ENCODE measurements at regions of chr12 and their contacts with region 1.

Region 1: GRCh38 chr12:8949342-8950220 is at the start of gene M6PR:
- DNase-seq: peak; percentile 94 to 96
- H3K4me3 ChIP-seq: peak within 1 kb of the TSS; percentile 67 to 83
- H3K27ac ChIP-seq: peak within 1 kb of the TSS; percentile 92 to 96
- H3K4me1 ChIP-seq: peaks cover 0 to 28% (median 20%) of the 10 kb centered on the region in 4 donors
- H3K27me3 ChIP-seq: no peaks in the 10 kb centered on the region
- CTCF ChIP-seq: peak in 1 of 2 experiments; percentile 51

Region 2: DNA sequence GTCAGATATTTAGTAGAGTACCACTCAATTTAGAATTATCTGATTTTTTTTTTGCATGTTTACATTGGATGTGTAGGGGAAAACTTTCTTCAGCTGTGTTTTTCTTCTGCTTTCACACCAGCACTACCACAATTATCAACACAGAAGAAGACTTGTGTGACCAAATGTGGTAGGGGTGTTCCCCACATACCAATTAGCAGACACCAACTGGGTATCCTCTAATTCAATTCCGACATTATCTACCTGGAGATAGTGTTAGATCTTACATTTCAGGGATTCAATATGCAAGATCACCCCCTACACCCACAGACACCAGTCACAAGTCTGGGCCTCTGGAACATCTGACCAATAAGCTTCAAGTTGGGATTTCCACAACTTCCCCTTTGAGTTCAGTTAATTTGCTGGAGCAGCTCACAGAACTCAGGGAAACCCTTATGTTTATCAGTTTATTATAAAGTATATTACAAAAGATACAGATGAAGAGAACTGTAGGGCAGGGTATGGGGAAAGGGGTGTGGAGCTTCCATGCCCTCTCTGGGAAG is 35.7 kb after region 1 on chr12:
- intact Hi-C with region 1: no loop called
- DNase-seq: no peak
- H3K4me3 ChIP-seq: no peak overlapping the region
- H3K27ac ChIP-seq: no peak overlapping the region
- H3K4me1 ChIP-seq: no peaks in the 10 kb centered on the region
- H3K27me3 ChIP-seq: no peaks in the 10 kb centered on the region
- CTCF ChIP-seq: no peak

Region 3: GRCh38 chr12:9039397-9039977 is 89.9 kb after region 1 on chr12:
- intact Hi-C with region 1: loop called (anchors 10 kb)
- DNase-seq: no peak
- H3K4me3 ChIP-seq: no peak overlapping the region
- H3K27ac ChIP-seq: no peak overlapping the region
- H3K4me1 ChIP-seq: peaks cover 0 to 8% (median 0%) of the 10 kb centered on the region in 4 donors
- H3K27me3 ChIP-seq: no peaks in the 10 kb centered on the region
- CTCF ChIP-seq: peak; percentile 71 to 77

Region 4: GRCh38 chr12:9064201-9064814 is 114.7 kb after region 1 on chr12:
- intact Hi-C with region 1: loop called (anchors 5 kb)
- DNase-seq: peak; percentile 70 to 77
- H3K4me3 ChIP-seq: peak overlapping the region; percentile 72 to 90
- H3K27ac ChIP-seq: peak overlapping the region; percentile 94 to 98
- H3K4me1 ChIP-seq: peaks cover 0 to 22% (median 16%) of the 10 kb centered on the region in 4 donors
- H3K27me3 ChIP-seq: no peaks in the 10 kb centered on the region
- CTCF ChIP-seq: peak; percentile 34 to 43

Measured in tibial artery (tissue), 4 donors.